Heart left ventricle (tissue), 16 donors: ENCODE measurements at regions of chr9 and their contacts with region 1.

Region 1: GRCh38 chr9:134267881-134268724 is 58.2 kb upstream of the RXRA start:
- DNase-seq: peak in 4 of 5 donors; percentile 39 to 73 (median 55)
- ATAC-seq: peak; percentile 73 to 85 (median 80)
- H3K4me3 ChIP-seq: no peak overlapping the region
- H3K27ac ChIP-seq: peak overlapping the region in 11 of 12 donors; percentile 2 to 79 (median 57)
- H3K4me1 ChIP-seq: peaks cover 0 to 17% (median 10%) of the 10 kb centered on the region in 12 donors
- H3K27me3 ChIP-seq: peaks cover 0 to 26% (median 0%) of the 10 kb centered on the region in 9 donors
- CTCF ChIP-seq: no peak
- POLR2A ChIP-seq: no peak

Region 2: GRCh38 chr9:134413890-134414731 is 146.0 kb after region 1 on chr9:
- intact Hi-C with region 1: loop called in 1 of 10 experiments (anchors 10 kb)
- DNase-seq: peak; percentile 71 to 92 (median 85)
- ATAC-seq: peak; percentile 66 to 78 (median 70)
- H3K4me3 ChIP-seq: no peak overlapping the region
- H3K27ac ChIP-seq: peak overlapping the region in 11 of 12 donors; percentile 47 to 82 (median 68)
- H3K4me1 ChIP-seq: peaks cover 19 to 91% (median 68%) of the 10 kb centered on the region in 12 donors
- H3K27me3 ChIP-seq: no peaks in the 10 kb centered on the region
- CTCF ChIP-seq: no peak
- POLR2A ChIP-seq: no peak

Region 3: GRCh38 chr9:134443168-134444037 is 175.3 kb after region 1 on chr9:
- intact Hi-C with region 1: loop called in 4 of 10 experiments (anchors 5 to 10 kb)
- DNase-seq: peak; percentile 82 to 93 (median 86)
- ATAC-seq: peak; percentile 44 to 90 (median 82)
- H3K4me3 ChIP-seq: peak overlapping the region in 1 of 12 donors; percentile 12
- H3K27ac ChIP-seq: peak overlapping the region in 1 of 12 donors; percentile 67
- H3K4me1 ChIP-seq: peaks cover 9 to 50% (median 39%) of the 10 kb centered on the region in 12 donors
- H3K27me3 ChIP-seq: no peaks in the 10 kb centered on the region
- CTCF ChIP-seq: peak; percentile 96 to 99 (median 99)
- POLR2A ChIP-seq: no peak

Region 4: GRCh38 chr9:134449221-134449894 is 181.3 kb after region 1 on chr9:
- intact Hi-C with region 1: loop called in 4 of 10 experiments (anchors 5 to 10 kb)
- DNase-seq: peak; percentile 91 to 95 (median 94)
- ATAC-seq: peak; percentile 93 to 98 (median 96)
- H3K4me3 ChIP-seq: no peak overlapping the region
- H3K27ac ChIP-seq: no peak overlapping the region
- H3K4me1 ChIP-seq: peaks cover 0 to 5% (median 0%) of the 10 kb centered on the region in 12 donors
- H3K27me3 ChIP-seq: no peaks in the 10 kb centered on the region
- CTCF ChIP-seq: peak; percentile 84 to 97 (median 93)
- POLR2A ChIP-seq: no peak

Region 5: DNA sequence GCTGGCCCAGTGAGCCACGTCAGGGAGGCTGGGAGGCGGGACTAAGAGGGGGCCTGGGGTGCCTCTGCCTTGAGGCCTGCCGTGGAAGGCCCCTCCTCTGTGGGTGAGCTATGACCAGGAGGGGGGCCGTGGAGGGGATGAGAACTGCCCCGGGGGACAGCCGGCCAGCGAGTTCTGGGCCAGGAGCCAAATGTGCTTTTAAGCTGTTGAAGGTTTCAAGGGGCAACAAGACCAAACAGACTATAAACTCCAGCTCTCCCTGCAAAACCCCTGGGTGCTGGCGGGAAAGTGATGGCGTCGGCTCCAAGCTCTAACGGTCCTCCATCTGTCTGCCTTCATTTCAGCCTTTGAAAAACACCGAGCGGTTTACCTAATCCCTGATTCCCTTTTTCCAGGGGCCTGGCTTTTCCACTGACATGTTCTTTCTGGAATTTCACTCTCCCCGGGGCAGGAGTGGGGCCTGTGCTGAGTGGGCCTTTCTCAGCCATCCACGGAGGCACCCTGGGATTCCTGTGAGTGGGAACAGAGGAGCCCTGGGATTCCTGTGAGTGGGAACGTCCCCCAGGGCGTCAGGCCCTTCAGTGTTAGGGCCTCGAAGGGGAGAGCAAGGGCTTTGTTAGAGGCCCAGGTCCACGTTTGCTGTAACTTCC is 439.1 kb after region 1 on chr9:
- intact Hi-C with region 1: no loop called
- DNase-seq: peak; percentile 79 to 90 (median 87)
- ATAC-seq: peak; percentile 62 to 81 (median 66)
- H3K4me3 ChIP-seq: no peak overlapping the region
- H3K27ac ChIP-seq: peak overlapping the region; percentile 23 to 92 (median 72)
- H3K4me1 ChIP-seq: peaks cover 0 to 76% (median 28%) of the 10 kb centered on the region in 12 donors
- H3K27me3 ChIP-seq: no peaks in the 10 kb centered on the region
- CTCF ChIP-seq: no peak
- POLR2A ChIP-seq: no peak